ENCODE measurements at regions of chr6 and their contacts with region 1.

Region 1: DNA sequence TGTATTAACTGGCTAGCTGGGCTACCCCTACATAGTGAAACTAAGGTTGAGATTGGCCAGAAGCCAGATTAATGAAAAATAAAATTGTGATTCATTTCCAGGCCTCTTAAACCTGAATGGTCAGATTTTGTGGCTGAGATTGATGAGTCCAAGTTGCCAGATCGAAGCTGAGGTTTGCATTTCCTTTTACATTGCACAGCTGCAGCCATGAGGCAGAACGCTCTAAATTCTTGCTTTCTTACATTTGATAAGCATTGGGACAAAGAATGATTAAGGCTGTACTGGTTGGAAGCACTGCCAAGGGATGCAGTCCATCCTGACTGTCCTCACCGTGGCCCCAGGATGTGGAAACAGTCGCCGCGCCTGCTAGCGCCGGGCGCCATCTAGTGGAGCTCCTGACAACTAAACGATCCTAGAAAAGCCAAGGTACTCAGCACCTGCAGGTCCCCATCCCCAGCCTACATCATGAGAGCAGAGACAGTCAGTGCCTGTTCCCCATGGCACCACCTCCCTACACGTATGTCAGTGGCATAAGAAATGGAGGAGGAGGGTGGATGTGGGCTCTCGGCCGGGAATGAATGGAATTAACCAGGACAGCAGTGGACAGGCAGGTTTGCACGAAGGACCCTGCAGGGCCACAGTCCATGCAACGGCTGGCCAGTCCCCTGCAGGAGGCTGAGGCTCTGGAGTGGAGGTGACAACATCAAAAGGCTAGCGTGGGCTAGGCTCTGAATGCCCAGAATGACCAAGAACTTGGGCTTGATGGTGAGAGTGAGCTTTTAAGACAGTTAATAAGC is 19.0 kb downstream of the PXDC1 start:
- DNase-seq: peak; percentile 64
- ATAC-seq: peak; percentile 93
- H3K4me3 ChIP-seq: no peak overlapping the region
- H3K27ac ChIP-seq: no peak overlapping the region
- H3K4me1 ChIP-seq: no peaks in the 10 kb centered on the region
- H3K27me3 ChIP-seq: no peaks in the 10 kb centered on the region
- CTCF ChIP-seq: peak; percentile 99
- EP300 ChIP-seq: no peak
- POLR2A ChIP-seq: no peak
- RAD21 ChIP-seq: peak; percentile 96

Region 2: DNA sequence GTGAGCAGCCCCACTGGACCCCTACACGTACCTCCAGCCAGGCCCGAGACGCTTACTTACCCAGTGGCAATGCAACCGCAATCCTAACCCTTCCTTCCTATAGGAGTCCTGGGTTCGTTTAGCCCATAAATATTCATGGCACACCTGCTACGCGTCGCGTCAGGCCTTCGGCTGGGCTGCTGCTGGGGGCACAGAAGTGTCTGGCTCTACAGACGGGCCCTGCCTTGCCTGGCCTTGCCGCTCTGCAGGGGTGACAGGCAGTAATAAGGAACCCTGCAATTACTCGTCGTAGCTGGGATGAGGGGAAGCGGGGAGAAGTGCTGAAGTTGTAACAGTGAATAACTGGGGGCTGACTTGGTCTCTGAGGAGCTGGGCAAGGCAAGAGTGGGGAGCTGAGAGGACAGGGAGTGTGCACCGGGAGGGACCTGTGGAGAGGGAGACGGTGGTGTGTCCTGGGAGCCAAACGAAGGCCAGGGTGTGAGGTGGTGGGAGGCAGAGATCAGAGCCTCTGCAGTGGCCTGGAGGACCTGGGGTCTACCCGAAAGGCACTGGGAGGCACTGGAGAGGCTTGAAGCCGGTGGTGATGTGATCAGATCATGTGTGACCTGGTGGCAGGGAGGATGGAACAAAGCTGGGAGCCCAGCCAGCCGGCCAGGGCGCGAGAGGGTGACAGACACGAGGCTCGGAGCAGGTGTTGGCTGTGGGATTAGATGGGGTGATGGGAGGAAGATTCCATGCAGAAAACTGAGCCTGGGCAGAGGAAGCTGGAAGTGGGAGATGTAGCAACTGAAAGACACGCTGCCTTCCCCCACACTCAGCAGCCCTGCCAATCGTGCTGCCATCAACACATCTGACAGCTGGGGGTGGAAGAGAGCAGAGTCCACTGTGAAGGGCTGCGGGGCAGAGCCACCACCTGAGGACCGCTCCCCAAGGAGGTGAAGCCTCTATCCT is 437.3 kb before region 1 on chr6:
- CTCF ChIA-PET with region 1: no interaction called
- POLR2A ChIA-PET with region 1: no interaction called
- in situ Hi-C with region 1: no loop called
- intact Hi-C with region 1: loop called (anchors 1 kb)
- DNase-seq: peak; percentile 25
- ATAC-seq: peak; percentile 72
- H3K4me3 ChIP-seq: no peak overlapping the region
- H3K27ac ChIP-seq: no peak overlapping the region
- H3K4me1 ChIP-seq: peaks cover 11% of the 10 kb centered on the region
- H3K27me3 ChIP-seq: no peaks in the 10 kb centered on the region
- CTCF ChIP-seq: peak; percentile 70
- EP300 ChIP-seq: no peak
- POLR2A ChIP-seq: no peak
- RAD21 ChIP-seq: peak; percentile 53; the same call in 1 of the 2 replicates

Region 3: DNA sequence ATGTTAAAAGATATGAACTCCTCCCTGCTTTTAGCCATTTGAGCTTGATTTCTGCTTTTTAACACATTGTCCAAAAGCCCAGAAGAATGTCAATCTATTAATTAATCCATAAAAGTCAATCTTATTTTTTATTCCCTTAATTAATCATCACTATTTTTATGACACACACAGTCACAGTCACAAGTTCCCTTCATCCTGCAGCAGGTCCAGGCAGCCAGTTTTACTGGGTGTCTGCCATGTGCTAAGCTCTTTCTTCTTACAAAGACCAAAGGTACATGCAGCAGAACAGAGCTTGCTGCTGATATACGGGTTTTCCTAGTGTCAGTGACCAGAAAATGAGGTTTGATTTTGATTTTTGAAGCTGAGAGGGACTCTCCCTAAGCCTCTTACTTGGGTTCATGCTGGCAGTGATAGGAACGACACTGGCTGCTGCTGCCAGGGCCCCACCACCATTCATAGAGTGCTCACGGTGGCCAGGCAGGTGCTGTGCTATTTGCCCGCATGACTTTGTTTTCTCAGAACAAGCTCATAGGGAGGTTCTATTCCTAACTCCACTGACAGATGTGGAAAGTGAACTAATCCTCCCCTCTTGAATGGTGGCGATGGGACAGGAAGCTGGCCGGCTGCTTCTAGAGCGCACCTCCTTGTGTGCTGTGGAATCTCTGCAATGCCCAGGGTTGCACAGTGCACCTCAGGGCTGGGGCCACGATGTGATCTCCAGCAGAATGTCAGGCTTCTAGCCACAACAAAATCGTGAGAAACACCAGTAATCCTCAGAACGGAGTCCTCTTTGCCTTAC is 222.2 kb before region 1 on chr6:
- CTCF ChIA-PET with region 1: interaction called, 3 read pairs
- POLR2A ChIA-PET with region 1: no interaction called
- in situ Hi-C with region 1: no loop called
- intact Hi-C with region 1: loop called (anchors 5 kb)
- DNase-seq: no peak
- ATAC-seq: peak; percentile 51
- H3K4me3 ChIP-seq: peak overlapping the region in 1 of 3 experiments; percentile 21; a peak in 1 of 6 replicates
- H3K27ac ChIP-seq: no peak overlapping the region
- H3K4me1 ChIP-seq: peaks cover 55% of the 10 kb centered on the region
- H3K27me3 ChIP-seq: no peaks in the 10 kb centered on the region
- CTCF ChIP-seq: no peak
- EP300 ChIP-seq: no peak
- POLR2A ChIP-seq: no peak
- RAD21 ChIP-seq: no peak

Measured in HepG2 (cell line).